Activated T-helper 2 cell treated with anti-CD3 and anti-CD28 coated beads, Interferon-gamma antibody, Interleukin-2, Interleukin-4, amounts not matched to agents 10 μg/mL and 5 μg/mL and 100 μg/mL, durations not matched to agents 14 hours and 24 hours and 36 hours (primary cell): ENCODE measurements at regions of chr12 and their contacts with region 1.

Region 1: DNA sequence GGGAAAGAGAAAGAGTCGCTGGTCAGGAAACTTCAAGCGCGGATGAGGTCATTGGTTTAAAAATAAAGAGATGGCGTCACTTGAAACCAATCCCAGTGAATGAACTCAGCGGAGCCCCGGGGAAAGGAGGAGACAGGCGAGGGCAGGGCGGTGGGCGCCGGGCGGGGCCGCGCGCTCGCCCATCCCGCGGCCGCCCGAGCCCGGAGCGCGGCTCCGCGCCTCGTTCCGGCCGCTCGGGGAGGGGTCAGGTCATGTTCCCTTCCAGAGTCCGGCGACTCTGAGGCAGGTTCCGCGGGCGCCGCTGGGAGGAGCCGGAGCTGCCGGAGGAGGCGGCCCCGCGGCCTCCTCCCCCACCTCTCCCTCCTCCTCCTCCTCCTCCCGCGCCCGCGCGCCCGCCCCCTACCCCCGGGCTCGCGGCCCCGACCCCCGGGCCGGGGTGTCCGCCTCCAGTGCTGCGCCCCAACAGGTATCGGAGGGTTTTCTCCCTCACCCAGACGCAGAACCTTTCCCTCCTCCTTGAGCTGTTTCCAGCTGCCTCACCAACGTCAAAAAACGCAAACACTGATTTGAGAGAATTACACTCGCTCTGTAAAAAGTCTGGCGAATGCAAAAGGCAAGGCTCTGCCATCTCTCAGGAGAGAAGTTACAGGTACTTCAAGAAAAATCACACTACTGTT is at the start of gene DUSP16:
- DNase-seq: peak; percentile 84
- H3K4me3 Mint-ChIP-seq: peak within 1 kb of the TSS; percentile 85
- H3K27ac Mint-ChIP-seq: peak within 1 kb of the TSS; percentile 95
- H3K4me1 Mint-ChIP-seq: peaks cover 37% of the 10 kb centered on the region
- H3K27me3 Mint-ChIP-seq: no peaks in the 10 kb centered on the region
- total RNA-seq, gene DUSP16: 64.7 and 66.5 TPM in 2 replicates

Region 2: DNA sequence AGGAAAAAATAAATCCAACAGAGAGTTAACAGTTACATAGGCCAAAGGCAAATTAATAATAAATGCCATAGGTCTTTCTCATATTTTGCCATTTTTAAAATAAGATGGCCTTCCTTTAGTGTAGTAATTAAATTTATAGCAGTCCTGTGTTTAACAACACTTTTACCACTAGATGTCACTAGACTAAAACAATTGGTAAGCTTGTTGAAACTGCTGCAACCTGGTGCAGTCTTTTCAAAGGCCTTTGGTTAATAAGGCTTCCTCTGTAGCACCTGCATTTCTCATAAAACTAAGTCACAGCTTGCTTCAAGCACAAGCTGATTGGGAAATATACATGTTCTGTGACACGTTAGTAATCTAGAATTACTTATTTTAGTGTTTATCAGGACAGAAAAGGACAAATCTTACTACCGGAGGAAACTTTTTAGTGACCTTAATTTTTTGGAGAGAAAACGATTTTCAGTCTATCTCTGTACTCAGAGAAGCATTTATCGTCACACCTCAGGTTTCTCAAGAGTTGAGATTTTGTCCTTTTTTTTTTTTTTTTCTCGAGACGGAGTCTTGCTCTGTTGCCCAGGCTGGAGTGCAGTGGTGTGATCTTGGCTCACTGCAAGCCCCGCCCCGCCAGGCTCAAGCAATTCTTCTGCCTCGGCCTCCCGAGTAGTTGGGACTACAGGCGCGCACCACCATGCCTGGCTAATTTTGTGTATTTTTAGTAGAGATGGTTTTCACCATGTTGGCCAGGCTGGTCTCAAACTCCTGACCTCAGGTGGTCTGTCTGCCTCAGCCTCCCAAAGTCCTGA is 185.9 kb before region 1 on chr12:
- intact Hi-C with region 1: loop called (anchors 1 kb)
- DNase-seq: no peak
- H3K4me3 Mint-ChIP-seq: no peak overlapping the region
- H3K27ac Mint-ChIP-seq: peak overlapping the region; percentile 59
- H3K4me1 Mint-ChIP-seq: peaks cover 34% of the 10 kb centered on the region
- H3K27me3 Mint-ChIP-seq: no peaks in the 10 kb centered on the region

Region 3: GRCh38 chr12:12474931-12475795 is 87.6 kb before region 1 on chr12:
- intact Hi-C with region 1: loop called (anchors 1 kb)
- DNase-seq: peak; percentile 56
- H3K4me3 Mint-ChIP-seq: peak overlapping the region; percentile 74
- H3K27ac Mint-ChIP-seq: peak overlapping the region; percentile 96
- H3K4me1 Mint-ChIP-seq: peaks cover 73% of the 10 kb centered on the region
- H3K27me3 Mint-ChIP-seq: no peaks in the 10 kb centered on the region

Region 4: DNA sequence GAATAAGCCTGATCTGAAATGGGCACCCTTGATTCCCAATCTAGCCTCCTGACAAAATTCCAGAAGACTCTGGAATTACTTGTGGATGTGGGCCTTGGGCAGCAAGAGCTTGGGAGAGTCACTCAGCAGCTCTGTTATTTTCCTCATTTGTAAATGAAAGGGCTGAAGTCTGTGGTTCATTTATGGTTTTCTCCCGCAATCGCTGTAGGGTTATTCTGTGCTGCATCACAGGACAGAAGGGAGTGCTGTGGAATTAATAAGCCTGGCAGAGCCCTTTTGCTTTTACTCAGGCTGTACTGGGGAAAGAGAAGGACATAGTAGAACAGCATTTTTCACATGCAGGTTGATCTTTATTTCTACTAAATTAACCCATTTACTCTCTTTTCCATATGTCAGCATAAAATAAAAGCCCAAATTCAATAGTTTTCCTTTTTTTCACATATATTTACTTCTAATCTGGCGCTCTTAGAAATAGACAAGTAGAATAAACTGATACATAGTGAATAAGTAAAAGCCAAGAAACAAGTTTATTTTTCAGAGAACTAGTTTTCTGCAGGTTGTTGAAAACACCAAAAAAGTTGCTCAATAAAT is 49.2 kb before region 1 on chr12:
- intact Hi-C with region 1: loop called (anchors 2 kb)
- DNase-seq: no peak
- H3K4me3 Mint-ChIP-seq: no peak overlapping the region
- H3K27ac Mint-ChIP-seq: no peak overlapping the region
- H3K4me1 Mint-ChIP-seq: peaks cover 22% of the 10 kb centered on the region
- H3K27me3 Mint-ChIP-seq: no peaks in the 10 kb centered on the region

Region 5: DNA sequence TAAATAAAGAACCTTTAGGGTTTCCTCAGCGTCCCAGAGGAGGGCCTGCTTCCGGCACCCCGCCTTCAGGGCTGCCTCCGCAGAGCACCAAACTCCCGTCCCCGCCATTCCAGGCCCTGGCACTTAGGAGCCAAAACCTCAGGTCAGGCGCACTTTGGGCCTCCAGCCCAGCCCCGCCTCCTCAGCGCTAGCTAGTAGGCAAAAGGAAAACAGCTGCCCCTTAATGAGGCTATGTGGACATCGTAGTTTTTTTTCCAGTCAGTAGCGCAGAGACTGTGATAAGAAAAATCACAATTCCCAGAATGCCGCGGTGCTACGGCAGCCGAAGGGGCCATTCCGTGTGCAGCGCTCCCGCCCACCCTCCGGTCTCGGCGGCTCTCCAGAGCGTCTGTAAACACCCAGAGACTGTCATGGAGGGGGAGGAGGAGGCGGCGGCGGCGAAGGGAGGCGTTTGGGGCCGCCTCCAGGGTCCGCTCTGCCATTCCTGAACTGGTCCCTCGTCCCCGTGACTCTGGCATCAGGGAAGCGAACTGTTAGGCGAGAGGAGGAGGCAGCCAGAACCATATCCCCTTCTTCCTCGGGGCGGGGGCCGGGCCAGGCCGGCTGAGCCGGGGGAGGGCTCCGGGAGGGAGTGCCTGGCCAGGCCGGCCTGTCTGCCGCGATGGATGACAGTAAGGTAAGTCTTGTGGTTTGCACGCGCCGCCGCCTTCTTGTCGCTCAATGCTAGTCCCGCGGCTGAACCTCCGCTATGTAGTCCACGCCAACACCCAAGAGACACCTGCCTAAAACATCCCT is 49.0 kb after region 1 on chr12 and contains the start of gene CREBL2:
- intact Hi-C with region 1: loop called (anchors 1 kb)
- DNase-seq: peak; percentile 79
- H3K4me3 Mint-ChIP-seq: peak within 1 kb of the TSS; percentile 94
- H3K27ac Mint-ChIP-seq: peak within 1 kb of the TSS; percentile 88
- H3K4me1 Mint-ChIP-seq: peaks cover 49% of the 10 kb centered on the region
- H3K27me3 Mint-ChIP-seq: no peaks in the 10 kb centered on the region
- total RNA-seq, gene CREBL2: 22.3 and 23.3 TPM in 2 replicates

Region 6: DNA sequence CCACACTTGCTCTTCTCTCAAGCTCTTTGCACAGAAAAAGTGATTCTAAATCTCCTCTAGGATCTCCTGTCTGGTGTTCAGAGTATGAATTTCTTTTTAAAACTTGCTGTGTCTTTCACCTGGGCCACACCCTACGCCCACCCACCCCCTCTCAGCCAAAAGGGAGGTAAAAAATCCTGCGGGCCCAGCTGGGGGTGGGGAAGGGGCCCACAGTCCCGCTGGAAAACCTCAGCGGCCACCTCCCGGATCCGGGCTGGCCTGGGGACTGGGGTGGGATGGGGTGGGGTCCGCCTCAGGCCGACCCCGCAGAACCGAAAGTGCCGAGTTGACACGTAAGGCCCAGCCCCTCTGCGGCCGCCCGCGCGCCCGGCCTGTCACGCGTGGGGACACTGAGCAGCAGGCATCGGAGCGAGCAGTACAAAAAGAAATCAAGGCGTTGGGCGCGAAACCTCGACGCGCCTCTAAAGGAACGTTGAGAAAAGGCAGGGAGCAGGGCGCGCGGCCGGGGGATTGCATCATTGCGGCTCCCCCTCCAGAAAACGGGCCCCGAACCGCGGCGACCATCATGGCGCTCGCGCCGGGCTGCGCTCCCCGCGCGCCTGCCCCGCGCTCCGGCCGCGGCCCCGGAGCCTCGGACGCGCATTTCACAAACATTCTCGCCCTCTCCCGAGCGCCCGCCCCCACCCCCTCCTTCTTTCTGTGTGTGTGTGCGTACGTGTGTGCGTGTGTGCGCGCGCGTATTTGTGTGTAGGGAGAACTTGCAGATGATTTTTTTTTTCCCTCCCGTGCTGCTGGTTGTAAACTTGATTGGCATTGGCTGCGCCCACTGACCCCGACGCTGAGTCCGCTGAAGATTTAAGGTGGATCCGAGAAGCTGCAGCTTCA is 162.2 kb after region 1 on chr12:
- intact Hi-C with region 1: loop called (anchors 2 kb)
- DNase-seq: peak; percentile 90
- H3K4me3 Mint-ChIP-seq: peak overlapping the region; percentile 88
- H3K27ac Mint-ChIP-seq: peak overlapping the region; percentile 96
- H3K4me1 Mint-ChIP-seq: peaks cover 42% of the 10 kb centered on the region
- H3K27me3 Mint-ChIP-seq: no peaks in the 10 kb centered on the region